IMR-90 (cell line): ENCODE measurements at regions of chr17 and their contacts with region 1.

Region 1: GRCh38 chr17:40854159-40854814 is 12.7 kb downstream of the KRT12 start:
- DNase-seq: peak; percentile 93
- ATAC-seq: peak; percentile 75
- H3K4me3 ChIP-seq: no peak overlapping the region
- H3K27ac ChIP-seq: no peak overlapping the region
- H3K4me1 ChIP-seq: peaks cover 19% of the 10 kb centered on the region
- H3K27me3 ChIP-seq: no peaks in the 10 kb centered on the region
- CTCF ChIP-seq: no peak
- POLR2A ChIP-seq: no peak
- RAD21 ChIP-seq: 0 out of 2 replicates have a peak, but pooled peaks have one; percentile 6

Region 2: DNA sequence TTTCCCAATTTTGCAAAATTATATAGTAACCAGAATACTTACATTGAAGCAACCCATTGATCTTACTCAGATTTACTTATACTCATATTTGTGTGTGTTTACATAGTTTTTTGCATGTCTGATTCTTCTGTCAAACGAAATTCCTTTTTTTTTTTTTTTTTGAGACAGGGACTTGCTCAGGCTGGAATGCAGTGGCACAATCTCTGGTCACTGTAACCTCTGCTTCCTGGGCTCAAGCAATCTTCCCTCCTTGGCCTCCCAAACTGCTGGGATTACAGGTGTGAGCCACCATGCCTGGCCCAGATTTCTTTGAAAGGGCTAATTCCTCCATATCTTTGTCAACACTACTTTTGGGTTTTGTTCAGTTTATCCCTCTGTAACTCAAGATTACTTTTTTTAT is 466.6 kb before region 1 on chr17:
- CTCF ChIA-PET with region 1: no interaction called
- POLR2A ChIA-PET with region 1: no interaction called
- dilution Hi-C with region 1: no loop called
- in situ Hi-C with region 1: no loop called
- intact Hi-C with region 1: no loop called
- DNase-seq: no peak
- ATAC-seq: no peak
- H3K4me3 ChIP-seq: no peak overlapping the region
- H3K27ac ChIP-seq: no peak overlapping the region
- H3K4me1 ChIP-seq: no peaks in the 10 kb centered on the region
- H3K27me3 ChIP-seq: no peaks in the 10 kb centered on the region
- CTCF ChIP-seq: no peak
- POLR2A ChIP-seq: no peak
- RAD21 ChIP-seq: no peak

Region 3: DNA sequence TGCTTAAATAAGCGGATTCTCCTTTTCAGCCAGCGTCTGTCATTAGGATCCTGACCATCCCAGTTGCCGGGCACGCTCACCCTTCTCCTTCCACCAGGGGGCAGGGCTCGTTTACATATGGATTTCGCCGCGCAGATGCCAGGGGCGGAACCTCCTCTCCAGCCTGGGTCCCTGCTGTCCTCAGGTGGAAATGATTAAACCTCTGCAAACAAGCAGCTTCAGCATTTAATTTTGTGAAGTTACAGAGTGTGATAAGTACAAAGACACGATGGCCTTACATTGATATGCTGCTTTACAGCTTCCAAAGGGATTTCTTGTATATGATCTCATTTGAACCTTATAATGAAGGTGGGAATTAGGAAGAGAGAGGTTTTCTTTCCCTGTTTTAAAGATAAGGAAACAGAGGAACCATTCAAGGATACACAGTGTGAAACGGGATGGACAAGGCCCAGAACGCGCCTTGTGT is 50.6 kb before region 1 on chr17:
- CTCF ChIA-PET with region 1: interaction called, 4 read pairs
- POLR2A ChIA-PET with region 1: no interaction called
- dilution Hi-C with region 1: no loop called
- in situ Hi-C with region 1: no loop called
- intact Hi-C with region 1: loop called (anchors 1 kb)
- DNase-seq: peak; percentile 66
- ATAC-seq: peak; percentile 100
- H3K4me3 ChIP-seq: no peak overlapping the region
- H3K27ac ChIP-seq: no peak overlapping the region
- H3K4me1 ChIP-seq: no peaks in the 10 kb centered on the region
- H3K27me3 ChIP-seq: peaks cover 25% of the 10 kb centered on the region
- CTCF ChIP-seq: peak; percentile 92
- POLR2A ChIP-seq: peak; percentile 42; the same call in 1 of the 2 replicates
- RAD21 ChIP-seq: peak; percentile 95

Region 4: DNA sequence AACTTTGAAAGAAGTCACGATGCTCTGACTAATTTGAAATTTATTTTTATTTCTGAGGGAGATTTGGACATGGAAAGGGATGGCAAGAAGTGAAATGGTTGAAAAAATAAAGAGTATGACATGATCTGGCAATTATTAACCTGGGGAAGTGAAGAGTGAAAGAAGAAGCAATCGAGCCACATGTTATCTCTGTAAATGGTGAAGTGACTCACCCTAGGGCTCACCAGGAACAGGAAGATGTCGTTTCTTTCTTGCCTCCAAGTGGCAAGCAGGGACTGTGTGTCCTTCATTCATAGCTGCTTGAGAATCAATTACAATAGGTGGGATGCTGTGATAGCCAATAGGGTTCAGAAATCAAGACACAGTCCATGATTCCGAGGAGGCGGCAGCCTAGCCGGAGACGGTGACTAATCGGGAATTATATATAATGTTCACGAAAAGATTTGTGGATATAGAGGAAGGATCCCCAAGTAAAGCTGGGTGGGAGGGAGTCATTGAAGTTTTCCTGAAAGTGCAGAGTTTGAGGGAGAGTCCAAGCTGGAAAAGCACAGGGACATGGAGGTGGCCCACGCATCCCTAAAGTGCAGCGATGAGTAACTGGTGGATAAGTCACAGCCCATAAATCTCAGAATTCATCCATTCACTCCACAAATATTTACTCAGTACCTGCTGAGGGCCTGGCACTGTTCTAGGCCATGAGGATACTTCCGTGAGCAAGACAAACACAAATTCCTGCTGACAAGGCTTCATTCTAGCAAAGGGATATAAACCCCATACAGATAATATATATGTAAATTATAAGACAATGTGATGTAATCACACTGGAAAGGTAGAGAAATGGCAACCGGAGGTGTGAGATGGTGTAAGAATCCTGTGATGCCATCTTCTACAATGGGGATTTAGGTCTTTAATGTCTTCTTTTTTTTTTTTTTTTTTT is 49.1 kb after region 1 on chr17:
- CTCF ChIA-PET with region 1: interaction called, 6 read pairs
- POLR2A ChIA-PET with region 1: no interaction called
- dilution Hi-C with region 1: no loop called
- in situ Hi-C with region 1: loop called (anchors 5 kb)
- intact Hi-C with region 1: loop called (anchors 2 kb)
- DNase-seq: peak; percentile 70
- ATAC-seq: peak; percentile 72
- H3K4me3 ChIP-seq: peak overlapping the region; percentile 0; the same call in 1 of the 2 replicates
- H3K27ac ChIP-seq: peak overlapping the region; percentile 63
- H3K4me1 ChIP-seq: peaks cover 15% of the 10 kb centered on the region
- H3K27me3 ChIP-seq: no peaks in the 10 kb centered on the region
- CTCF ChIP-seq: no peak
- POLR2A ChIP-seq: no peak
- RAD21 ChIP-seq: no peak

Region 5: GRCh38 chr17:41211845-41212466 is 357.7 kb after region 1 on chr17:
- CTCF ChIA-PET with region 1: no interaction called
- POLR2A ChIA-PET with region 1: no interaction called
- dilution Hi-C with region 1: no loop called
- in situ Hi-C with region 1: no loop called
- intact Hi-C with region 1: no loop called
- DNase-seq: peak; percentile 73
- ATAC-seq: no peak
- H3K4me3 ChIP-seq: no peak overlapping the region
- H3K27ac ChIP-seq: no peak overlapping the region
- H3K4me1 ChIP-seq: no peaks in the 10 kb centered on the region
- H3K27me3 ChIP-seq: peaks cover 4% of the 10 kb centered on the region; the same call in 1 of the 2 replicates
- CTCF ChIP-seq: no peak
- POLR2A ChIP-seq: no peak
- RAD21 ChIP-seq: no peak

Region 6: GRCh38 chr17:41322094-41322902 is 468.0 kb after region 1 on chr17:
- CTCF ChIA-PET with region 1: interaction called, 9 read pairs
- POLR2A ChIA-PET with region 1: no interaction called
- dilution Hi-C with region 1: no loop called
- in situ Hi-C with region 1: no loop called
- intact Hi-C with region 1: loop called (anchors 2 kb)
- DNase-seq: peak; percentile 79
- ATAC-seq: peak; percentile 97
- H3K4me3 ChIP-seq: no peak overlapping the region
- H3K27ac ChIP-seq: peak overlapping the region; percentile 51; the same call in 1 of the 2 replicates
- H3K4me1 ChIP-seq: peaks cover 2% of the 10 kb centered on the region
- H3K27me3 ChIP-seq: no peaks in the 10 kb centered on the region
- CTCF ChIP-seq: peak; percentile 80
- POLR2A ChIP-seq: no peak
- RAD21 ChIP-seq: peak; percentile 81

Region 7: DNA sequence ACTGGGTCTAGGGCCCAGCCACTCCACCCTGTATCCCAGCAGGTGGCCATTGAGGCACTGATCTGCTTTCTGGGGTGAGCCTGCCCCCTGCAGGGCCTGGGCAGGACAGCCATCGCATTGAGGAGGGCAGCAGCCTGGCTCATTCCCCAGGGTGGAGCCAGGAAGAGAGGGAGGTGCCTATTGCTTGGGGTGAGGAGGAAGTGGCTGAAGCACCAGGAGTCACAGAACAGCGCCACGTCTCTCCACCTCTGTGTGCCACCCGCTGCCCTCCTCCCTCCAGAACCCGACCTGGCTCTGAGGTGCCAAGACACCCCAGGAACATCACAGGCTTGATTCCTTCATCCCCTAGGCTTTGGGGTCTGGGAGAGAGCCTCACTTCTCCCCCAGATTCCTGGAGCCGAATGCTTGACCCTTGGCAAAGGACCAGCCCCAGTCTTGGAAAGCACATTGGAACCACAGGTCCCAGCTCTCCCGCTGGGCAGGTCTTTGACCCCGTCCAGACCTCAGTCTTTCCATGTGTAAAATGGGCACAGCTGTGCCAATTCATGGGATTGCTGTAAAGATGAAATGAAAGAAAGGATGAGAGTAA is 642.6 kb after region 1 on chr17:
- CTCF ChIA-PET with region 1: interaction called, 4 read pairs
- POLR2A ChIA-PET with region 1: no interaction called
- dilution Hi-C with region 1: no loop called
- in situ Hi-C with region 1: no loop called
- intact Hi-C with region 1: loop called (anchors 2 kb)
- DNase-seq: peak; percentile 83
- ATAC-seq: peak; percentile 97
- H3K4me3 ChIP-seq: no peak overlapping the region
- H3K27ac ChIP-seq: peak overlapping the region; percentile 36; the same call in 1 of the 2 replicates
- H3K4me1 ChIP-seq: peaks cover 22% of the 10 kb centered on the region
- H3K27me3 ChIP-seq: no peaks in the 10 kb centered on the region
- CTCF ChIP-seq: peak; percentile 93
- POLR2A ChIP-seq: no peak
- RAD21 ChIP-seq: peak; percentile 94

Region 8: GRCh38 chr17:41648411-41649195 is 794.3 kb after region 1 on chr17:
- CTCF ChIA-PET with region 1: interaction called, 9 read pairs
- POLR2A ChIA-PET with region 1: no interaction called
- dilution Hi-C with region 1: no loop called
- in situ Hi-C with region 1: no loop called
- intact Hi-C with region 1: loop called (anchors 1 kb)
- DNase-seq: peak; percentile 77
- ATAC-seq: peak; percentile 92
- H3K4me3 ChIP-seq: 0 out of 2 replicates have a peak overlapping the region, but pooled peaks have one; percentile 9
- H3K27ac ChIP-seq: peak overlapping the region; percentile 79
- H3K4me1 ChIP-seq: peaks cover 14% of the 10 kb centered on the region
- H3K27me3 ChIP-seq: no peaks in the 10 kb centered on the region; the same call in 1 of the 2 replicates
- CTCF ChIP-seq: peak; percentile 84
- POLR2A ChIP-seq: no peak
- RAD21 ChIP-seq: peak; percentile 57

Region 9: DNA sequence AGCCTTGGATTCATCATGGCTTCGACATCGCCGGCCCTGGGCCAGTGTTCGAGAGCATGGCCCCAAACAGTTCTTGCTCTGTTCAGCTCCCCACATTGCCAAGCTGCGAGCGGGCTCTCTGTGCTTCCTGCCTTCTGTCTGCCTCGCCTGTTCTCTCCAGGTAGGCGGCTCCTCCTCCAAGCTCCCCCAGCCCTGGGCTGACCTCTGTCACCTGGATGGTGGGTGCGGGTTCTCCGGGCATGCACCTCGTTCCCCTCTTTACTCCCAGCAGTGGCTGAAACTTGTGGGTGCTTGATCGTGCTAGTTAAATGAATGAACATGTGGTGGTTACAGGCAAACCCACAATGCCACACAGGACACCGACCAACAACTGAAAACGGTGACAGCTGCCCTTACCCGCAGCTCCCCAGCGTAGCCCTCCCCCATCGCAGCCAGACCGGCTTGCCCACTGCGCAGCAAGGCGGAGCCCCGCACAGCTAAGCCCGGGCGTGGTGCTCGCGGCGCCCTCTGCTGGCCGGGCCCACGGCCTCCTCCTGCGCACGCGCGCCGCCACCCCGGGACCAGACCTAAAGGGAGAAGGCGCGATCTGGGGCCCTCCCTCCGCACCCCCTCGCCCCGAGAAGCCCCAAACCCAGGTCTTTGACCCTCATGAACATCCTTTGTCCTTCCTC is 811.4 kb after region 1 on chr17:
- CTCF ChIA-PET with region 1: interaction called, 17 read pairs
- POLR2A ChIA-PET with region 1: no interaction called
- dilution Hi-C with region 1: no loop called
- in situ Hi-C with region 1: loop called (anchors 5 kb)
- intact Hi-C with region 1: loop called (anchors 1 kb)
- DNase-seq: peak; percentile 74
- ATAC-seq: peak; percentile 90
- H3K4me3 ChIP-seq: peak overlapping the region; percentile 40
- H3K27ac ChIP-seq: peak overlapping the region; percentile 55
- H3K4me1 ChIP-seq: peaks cover 11% of the 10 kb centered on the region
- H3K27me3 ChIP-seq: no peaks in the 10 kb centered on the region
- CTCF ChIP-seq: peak; percentile 94
- POLR2A ChIP-seq: no peak
- RAD21 ChIP-seq: peak; percentile 29; the same call in 1 of the 2 replicates